ENCODE measurements at regions of chr12 and their contacts with region 1.

Region 1: DNA sequence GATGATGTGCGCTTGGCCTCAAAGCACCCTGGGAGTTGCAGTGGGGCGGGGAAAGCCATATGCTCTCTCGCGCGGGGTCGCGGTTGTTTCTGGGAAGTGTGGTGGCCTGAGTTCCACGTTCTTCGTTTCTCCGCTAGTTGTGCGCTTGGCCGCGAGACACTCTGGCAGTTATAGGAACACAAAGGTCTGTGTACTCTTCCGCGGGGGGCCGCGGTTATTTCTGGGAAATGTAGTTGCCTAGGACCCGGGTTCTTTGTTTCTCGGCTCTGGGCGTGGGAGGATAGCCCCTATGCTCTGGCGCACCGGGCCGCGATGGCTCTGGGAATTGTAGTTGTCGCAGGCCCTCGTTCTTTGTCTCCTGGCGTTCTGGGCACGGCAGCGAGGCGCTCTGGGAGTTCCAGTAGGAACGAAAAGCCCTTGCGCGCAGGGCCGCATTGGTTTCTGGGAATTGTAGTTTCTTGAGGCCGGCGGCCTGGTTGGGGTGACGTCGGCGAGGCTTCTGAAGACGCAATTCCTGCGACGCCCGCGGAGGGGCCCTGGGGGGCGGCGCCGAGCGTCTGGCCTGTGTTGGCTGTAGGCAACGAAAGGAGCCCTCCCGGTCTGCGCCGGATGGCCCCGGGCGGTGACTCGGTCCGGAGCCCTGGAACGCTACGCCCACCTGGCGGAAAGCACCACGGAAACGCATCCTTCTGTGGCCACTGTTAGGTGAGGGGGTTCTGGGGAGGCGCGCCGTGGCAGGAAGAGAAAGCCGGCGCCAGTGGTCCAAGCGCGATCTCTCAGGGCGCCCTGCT is at the start of gene ZNF140:
- DNase-seq: peak; percentile 92 to 97 (median 95)
- H3K4me3 ChIP-seq: peak within 1 kb of the TSS; percentile 94
- H3K4me3 Mint-ChIP-seq: peak within 1 kb of the TSS in 1 of 7 donors; percentile 41
- H3K27ac ChIP-seq: peak within 1 kb of the TSS; percentile 97
- H3K27ac Mint-ChIP-seq: peak within 1 kb of the TSS in 3 of 8 donors; percentile 34 to 79 (median 52)
- H3K4me1 ChIP-seq: peaks cover 18% of the 10 kb centered on the region
- H3K4me1 Mint-ChIP-seq: peaks cover 11 to 19% (median 17%) of the 10 kb centered on the region in 3 donors
- H3K27me3 ChIP-seq: no peaks in the 10 kb centered on the region
- H3K27me3 Mint-ChIP-seq: no peaks in the 10 kb centered on the region
- total RNA-seq, gene ZNF140: 13.5 to 14.8 TPM

Region 2: GRCh38 chr12:133130038-133130807 is 49.7 kb after region 1 on chr12 and contains the starts of genes ZNF10 and ZNF891:
- CTCF ChIA-PET with region 1: interaction called, 5 read pairs
- POLR2A ChIA-PET with region 1: interaction called, 10 read pairs
- DNase-seq: peak; percentile 95 to 98 (median 97)
- H3K4me3 ChIP-seq: peak within 1 kb of the TSS; percentile 73
- H3K4me3 Mint-ChIP-seq: peak within 1 kb of the TSS; percentile 91 to 98 (median 97)
- H3K27ac ChIP-seq: peak within 1 kb of the TSS; percentile 94
- H3K27ac Mint-ChIP-seq: peak within 1 kb of the TSS; percentile 97 to 100 (median 99)
- H3K4me1 ChIP-seq: peaks cover 9% of the 10 kb centered on the region
- H3K4me1 Mint-ChIP-seq: peaks cover 19 to 27% (median 25%) of the 10 kb centered on the region in 3 donors
- H3K27me3 ChIP-seq: no peaks in the 10 kb centered on the region
- H3K27me3 Mint-ChIP-seq: peaks cover 0 to 5% of the 10 kb centered on the region in 2 donors
- total RNA-seq, gene ZNF10: 4.5 to 5.6 TPM
- total RNA-seq, gene ZNF891: 2.0 to 2.1 TPM

Region 3: GRCh38 chr12:133181238-133181959 is 100.8 kb after region 1 on chr12 and contains the start of gene ZNF268:
- CTCF ChIA-PET with region 1: interaction called, 12 read pairs
- POLR2A ChIA-PET with region 1: interaction called, 11 read pairs
- DNase-seq: peak; percentile 76 to 91 (median 84)
- H3K4me3 ChIP-seq: peak within 1 kb of the TSS; percentile 99
- H3K4me3 Mint-ChIP-seq: peak within 1 kb of the TSS; percentile 89 to 98 (median 92)
- H3K27ac ChIP-seq: peak within 1 kb of the TSS; percentile 87
- H3K27ac Mint-ChIP-seq: peak within 1 kb of the TSS; percentile 91 to 97 (median 95)
- H3K4me1 ChIP-seq: peaks cover 9% of the 10 kb centered on the region
- H3K4me1 Mint-ChIP-seq: peaks cover 29 to 38% (median 35%) of the 10 kb centered on the region in 3 donors
- H3K27me3 ChIP-seq: no peaks in the 10 kb centered on the region
- H3K27me3 Mint-ChIP-seq: peaks cover 0 to 1% of the 10 kb centered on the region in 2 donors
- total RNA-seq, gene ZNF268: 22.6 TPM

Measured in CD8-positive, alpha-beta memory T cell (primary cell).